Naive thymus-derived CD4-positive, alpha-beta T cell (primary cell): ENCODE measurements at regions of chr2 and their contacts with region 1.

Region 1: GRCh38 chr2:191030521-191031154 is 16.7 kb upstream of the STAT1 start:
- DNase-seq: peak in 7 of 9 donors; percentile 31 to 64 (median 59)
- ATAC-seq: peak; percentile 86
- H3K4me3 ChIP-seq: no peak overlapping the region
- H3K4me3 Mint-ChIP-seq: peak overlapping the region in 4 of 10 donors; percentile 6 to 41 (median 20)
- H3K27ac ChIP-seq: peak overlapping the region; percentile 52
- H3K27ac Mint-ChIP-seq: peak overlapping the region; percentile 36 to 83 (median 73)
- H3K4me1 ChIP-seq: peaks cover 27 to 30% of the 10 kb centered on the region in 2 donors
- H3K4me1 Mint-ChIP-seq: peaks cover 15 to 66% (median 37%) of the 10 kb centered on the region in 7 donors
- H3K27me3 ChIP-seq: no peaks in the 10 kb centered on the region
- H3K27me3 Mint-ChIP-seq: no peaks in the 10 kb centered on the region

Region 2: GRCh38 chr2:190781604-190782198 is 248.9 kb before region 1 on chr2:
- CTCF ChIA-PET with region 1: interaction called, 4 read pairs
- POLR2A ChIA-PET with region 1: no interaction called
- intact Hi-C with region 1: loop called (anchors 1 kb)
- DNase-seq: peak in 8 of 9 donors; percentile 27 to 60 (median 46)
- ATAC-seq: peak; percentile 77
- H3K4me3 ChIP-seq: no peak overlapping the region
- H3K4me3 Mint-ChIP-seq: no peak overlapping the region
- H3K27ac ChIP-seq: no peak overlapping the region
- H3K27ac Mint-ChIP-seq: no peak overlapping the region
- H3K4me1 ChIP-seq: no peaks in the 10 kb centered on the region
- H3K4me1 Mint-ChIP-seq: peaks cover 0 to 11% (median 1%) of the 10 kb centered on the region in 7 donors
- H3K27me3 ChIP-seq: no peaks in the 10 kb centered on the region
- H3K27me3 Mint-ChIP-seq: peaks cover 0 to 8% (median 0%) of the 10 kb centered on the region in 5 donors

Region 3: GRCh38 chr2:190853531-190854383 is 176.9 kb before region 1 on chr2:
- CTCF ChIA-PET with region 1: interaction called, 4 read pairs
- POLR2A ChIA-PET with region 1: no interaction called
- intact Hi-C with region 1: loop called in 1 of 2 experiments (anchors 1 kb)
- DNase-seq: no peak
- ATAC-seq: no peak
- H3K4me3 ChIP-seq: no peak overlapping the region
- H3K4me3 Mint-ChIP-seq: no peak overlapping the region
- H3K27ac ChIP-seq: no peak overlapping the region
- H3K27ac Mint-ChIP-seq: no peak overlapping the region
- H3K4me1 ChIP-seq: no peaks in the 10 kb centered on the region
- H3K4me1 Mint-ChIP-seq: no peaks in the 10 kb centered on the region
- H3K27me3 ChIP-seq: no peaks in the 10 kb centered on the region
- H3K27me3 Mint-ChIP-seq: no peaks in the 10 kb centered on the region

Region 4: DNA sequence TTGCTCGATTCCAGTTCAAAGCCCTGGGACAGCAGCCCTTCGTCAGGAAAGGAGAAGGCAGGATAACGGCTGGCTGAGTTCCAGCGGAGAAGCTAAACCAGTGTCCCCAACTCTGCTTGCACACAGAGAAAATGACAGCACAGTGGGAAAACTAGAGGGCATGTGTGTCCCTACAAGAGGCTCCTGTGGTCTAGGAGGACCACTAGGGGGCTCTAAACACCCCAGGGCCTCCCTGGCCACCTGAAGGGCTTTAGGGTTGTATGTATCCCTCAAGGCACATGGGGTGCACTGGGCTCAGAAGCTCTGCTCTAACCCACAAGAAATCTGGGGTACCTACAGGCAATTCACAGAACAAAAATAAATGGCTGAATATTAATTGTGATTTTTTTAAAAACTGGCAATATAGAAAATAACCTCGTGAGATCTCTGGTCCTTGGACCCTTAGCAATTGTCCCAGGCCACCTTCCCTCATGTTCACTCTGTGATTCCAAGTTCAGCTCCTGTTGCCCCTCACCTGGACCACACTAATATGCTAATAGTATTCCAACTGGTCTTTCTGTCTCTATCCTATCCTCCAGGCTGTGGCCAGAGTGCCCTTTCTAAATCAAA is 34.2 kb before region 1 on chr2:
- CTCF ChIA-PET with region 1: interaction called, 5 read pairs
- POLR2A ChIA-PET with region 1: interaction called, 8 read pairs
- intact Hi-C with region 1: loop called (anchors 1 to 5 kb)
- DNase-seq: peak in 6 of 9 donors; percentile 28 to 52 (median 35)
- ATAC-seq: peak; percentile 83
- H3K4me3 ChIP-seq: no peak overlapping the region
- H3K4me3 Mint-ChIP-seq: peak overlapping the region in 1 of 10 donors; percentile 28
- H3K27ac ChIP-seq: peak overlapping the region; percentile 34
- H3K27ac Mint-ChIP-seq: peak overlapping the region; percentile 52 to 92 (median 81)
- H3K4me1 ChIP-seq: peaks cover 3 to 7% of the 10 kb centered on the region in 2 donors
- H3K4me1 Mint-ChIP-seq: peaks cover 28 to 80% (median 55%) of the 10 kb centered on the region in 7 donors
- H3K27me3 ChIP-seq: no peaks in the 10 kb centered on the region
- H3K27me3 Mint-ChIP-seq: no peaks in the 10 kb centered on the region

Region 5: DNA sequence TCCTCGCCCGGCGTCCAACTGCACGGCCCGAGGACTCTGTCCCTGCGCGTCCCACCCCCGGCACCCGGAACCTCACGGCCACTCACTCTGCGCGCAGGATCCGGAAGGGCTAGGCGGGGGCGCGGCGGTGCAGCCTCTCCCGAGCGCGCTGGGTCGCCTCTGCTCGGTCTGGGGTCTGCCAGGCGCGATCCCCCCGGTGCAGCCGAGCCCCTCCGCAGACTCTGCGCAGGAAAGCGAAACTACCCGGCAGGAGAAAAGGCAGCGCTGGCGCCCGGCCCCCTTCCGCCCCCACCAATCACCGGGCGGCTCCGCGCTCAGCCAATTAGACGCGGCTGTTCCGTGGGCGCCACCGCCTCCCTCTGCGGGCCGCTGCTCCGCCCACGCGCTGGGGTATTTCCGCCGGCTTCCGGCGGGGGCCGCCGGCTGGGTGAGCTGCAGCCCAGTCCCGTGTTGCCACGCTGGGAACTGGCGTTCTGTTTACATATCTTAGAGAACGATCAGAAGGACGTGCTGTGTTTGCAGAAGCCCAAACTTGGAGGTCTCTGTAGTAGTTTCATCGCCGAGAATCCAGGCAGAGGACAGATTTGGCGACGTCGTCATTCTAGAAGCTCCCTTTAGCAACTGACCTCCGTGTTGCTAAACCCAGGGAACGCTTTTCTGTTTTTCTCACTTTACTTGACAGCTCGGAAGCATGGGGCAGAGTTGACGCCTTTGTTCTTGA is 16.5 kb before region 1 on chr2 and contains the start of gene STAT1:
- CTCF ChIA-PET with region 1: interaction called, 10 read pairs
- POLR2A ChIA-PET with region 1: interaction called, 27 read pairs
- intact Hi-C with region 1: loop called (anchors 1 kb)
- DNase-seq: peak; percentile 93 to 99 (median 97)
- ATAC-seq: peak; percentile 97
- H3K4me3 ChIP-seq: peak within 1 kb of the TSS; percentile 69
- H3K4me3 Mint-ChIP-seq: no peak within 1 kb of the TSS
- H3K27ac ChIP-seq: peak within 1 kb of the TSS; percentile 87
- H3K27ac Mint-ChIP-seq: no peak within 1 kb of the TSS
- H3K4me1 ChIP-seq: peaks cover 41 to 48% of the 10 kb centered on the region in 2 donors
- H3K4me1 Mint-ChIP-seq: peaks cover 23 to 51% (median 42%) of the 10 kb centered on the region in 7 donors
- H3K27me3 ChIP-seq: no peaks in the 10 kb centered on the region
- H3K27me3 Mint-ChIP-seq: no peaks in the 10 kb centered on the region
- total RNA-seq, gene STAT1: 74.1 to 1,177 (median 89.6) TPM

Region 6: DNA sequence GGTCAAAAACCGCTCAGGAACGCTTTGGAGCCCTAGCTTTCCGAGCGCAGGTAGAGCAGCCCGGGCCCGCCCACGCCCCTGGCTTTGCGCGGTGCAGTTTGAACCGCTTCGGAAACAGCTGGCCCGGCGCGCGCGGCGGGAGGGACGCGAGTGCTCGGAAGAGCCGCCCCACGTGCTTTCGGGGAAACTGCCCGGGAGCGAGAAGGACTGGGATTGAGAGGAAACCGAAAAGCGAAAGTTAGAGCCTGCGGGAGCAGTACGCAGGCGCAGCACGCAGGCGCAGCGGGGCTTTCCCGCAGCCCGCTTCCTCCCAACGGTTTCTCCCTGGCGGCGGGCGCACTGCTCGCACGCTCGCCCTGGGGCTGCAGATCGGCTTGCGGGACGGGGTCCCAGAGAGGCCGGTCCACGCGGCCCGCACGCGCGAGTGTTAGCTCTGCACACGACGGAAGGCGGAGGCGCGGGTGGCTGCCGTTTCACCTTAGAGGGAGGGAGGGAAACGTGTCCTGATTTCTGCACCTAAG is 10.4 kb before region 1 on chr2:
- CTCF ChIA-PET with region 1: interaction called, 5 read pairs
- POLR2A ChIA-PET with region 1: interaction called, 27 read pairs
- intact Hi-C with region 1: loop called (anchors 1 kb)
- DNase-seq: peak; percentile 89 to 99 (median 94)
- ATAC-seq: peak; percentile 88
- H3K4me3 ChIP-seq: peak overlapping the region; percentile 78
- H3K4me3 Mint-ChIP-seq: no peak overlapping the region
- H3K27ac ChIP-seq: peak overlapping the region; percentile 82
- H3K27ac Mint-ChIP-seq: no peak overlapping the region
- H3K4me1 ChIP-seq: peaks cover 44 to 48% of the 10 kb centered on the region in 2 donors
- H3K4me1 Mint-ChIP-seq: peaks cover 11 to 46% (median 32%) of the 10 kb centered on the region in 7 donors
- H3K27me3 ChIP-seq: no peaks in the 10 kb centered on the region
- H3K27me3 Mint-ChIP-seq: peaks cover 0 to 2% (median 0%) of the 10 kb centered on the region in 5 donors